Heart left ventricle (tissue), 16 donors: ENCODE measurements at regions of chr16 and their contacts with region 1.

Region 1: DNA sequence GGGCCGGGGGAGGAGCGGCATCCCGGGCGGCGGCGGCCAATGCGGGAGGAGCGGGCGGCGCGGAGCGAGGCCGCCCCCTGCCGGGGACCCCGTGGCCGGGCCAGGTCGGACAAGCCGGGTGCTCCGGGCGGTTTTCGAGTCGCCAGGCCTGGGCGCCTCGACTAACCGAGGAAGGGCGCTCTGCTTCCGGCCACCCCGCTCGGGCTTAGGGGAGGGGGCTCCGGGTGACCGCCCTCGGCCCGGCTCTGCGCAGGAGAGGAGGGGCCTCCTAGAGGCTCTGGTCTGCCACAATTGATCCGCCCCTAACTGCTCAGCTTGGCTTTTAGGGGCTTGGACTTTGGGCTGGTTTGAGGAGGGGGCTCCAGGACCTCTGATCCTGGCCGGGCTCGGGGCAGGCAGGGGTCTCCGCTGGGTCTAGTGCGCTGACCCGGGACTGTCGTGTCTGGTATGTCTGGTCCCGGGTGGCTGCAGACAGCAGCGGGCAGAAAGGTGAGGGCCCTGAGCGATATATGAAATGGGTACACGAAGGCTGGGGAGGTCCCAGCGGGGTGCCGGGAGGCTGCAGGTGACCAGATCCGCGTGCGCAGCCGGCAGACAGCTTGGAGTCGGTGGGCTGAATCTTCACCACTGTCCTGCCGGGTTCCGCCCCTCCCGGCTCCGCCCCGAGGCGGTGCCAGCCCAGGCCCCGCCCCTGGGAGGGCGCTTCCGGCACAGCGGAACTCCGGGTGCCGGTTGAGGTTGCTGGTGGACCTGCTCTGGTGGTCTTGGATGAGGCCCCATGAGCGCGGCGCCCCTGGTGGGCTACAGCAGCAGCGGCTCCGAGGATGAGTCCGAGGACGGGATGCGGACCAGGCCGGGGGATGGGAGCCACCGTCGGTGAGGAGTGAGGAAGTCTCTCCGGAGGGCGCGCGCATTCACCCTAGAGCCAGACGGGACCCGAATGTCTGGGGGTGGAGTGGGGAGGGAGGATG is at the start of gene USB1:
- DNase-seq: peak; percentile 90 to 95 (median 92)
- ATAC-seq: peak; percentile 90 to 96 (median 92)
- H3K4me3 ChIP-seq: peak within 1 kb of the TSS; percentile 27 to 89 (median 76)
- H3K27ac ChIP-seq: peak within 1 kb of the TSS; percentile 66 to 99 (median 92)
- H3K4me1 ChIP-seq: peaks cover 0 to 45% (median 28%) of the 10 kb centered on the region in 12 donors
- H3K27me3 ChIP-seq: no peaks in the 10 kb centered on the region
- CTCF ChIP-seq: peak; percentile 50 to 93 (median 77)
- POLR2A ChIP-seq: peak in 1 of 2 donors; percentile 88
- total RNA-seq, gene USB1: 20.3 to 61.9 (median 34.4) TPM

Region 2: DNA sequence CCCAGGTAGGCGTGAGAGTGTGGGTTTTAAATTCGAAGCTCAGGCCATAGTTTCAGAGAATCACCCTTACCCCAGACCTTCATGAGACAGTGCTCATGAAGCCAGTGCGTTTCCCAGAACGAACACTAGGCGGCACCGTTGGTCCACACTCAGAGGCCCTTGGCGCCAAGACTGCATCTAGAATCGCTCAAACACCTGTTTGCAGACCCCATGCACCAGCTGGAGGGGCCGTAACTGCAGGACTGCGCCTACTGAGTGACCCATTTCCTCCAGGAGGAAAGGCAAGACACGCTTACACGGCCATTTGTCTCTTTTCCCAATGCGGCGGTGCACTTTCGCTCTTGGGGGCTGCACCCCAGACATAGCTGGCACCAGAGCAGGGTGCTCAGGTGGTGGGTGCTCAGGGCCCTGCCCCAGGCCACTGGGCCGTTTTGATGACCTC is 424.5 kb before region 1 on chr16:
- intact Hi-C with region 1: loop called in 8 of 10 experiments (anchors 5 to 10 kb)
- DNase-seq: peak; percentile 56 to 83 (median 68)
- ATAC-seq: peak; percentile 56 to 81 (median 78)
- H3K4me3 ChIP-seq: no peak overlapping the region
- H3K27ac ChIP-seq: peak overlapping the region in 1 of 12 donors; percentile 75
- H3K4me1 ChIP-seq: peaks cover 0 to 4% (median 0%) of the 10 kb centered on the region in 12 donors
- H3K27me3 ChIP-seq: peaks cover 0 to 17% (median 0%) of the 10 kb centered on the region in 9 donors
- CTCF ChIP-seq: peak; percentile 86 to 96 (median 93)
- POLR2A ChIP-seq: no peak

Region 3: GRCh38 chr16:57734925-57735754 is 265.9 kb before region 1 on chr16:
- intact Hi-C with region 1: loop called in 2 of 10 experiments (anchors 5 to 10 kb)
- DNase-seq: peak; percentile 97 to 99 (median 98)
- ATAC-seq: peak; percentile 95 to 97 (median 96)
- H3K4me3 ChIP-seq: peak overlapping the region; percentile 56 to 98 (median 88)
- H3K27ac ChIP-seq: peak overlapping the region; percentile 68 to 96 (median 88)
- H3K4me1 ChIP-seq: peaks cover 0 to 26% (median 18%) of the 10 kb centered on the region in 12 donors
- H3K27me3 ChIP-seq: no peaks in the 10 kb centered on the region
- CTCF ChIP-seq: no peak
- POLR2A ChIP-seq: peak in 1 of 2 donors; percentile 40

Region 4: GRCh38 chr16:57757326-57757786 is 243.6 kb before region 1 on chr16:
- intact Hi-C with region 1: loop called in 9 of 10 experiments (anchors 2 to 10 kb)
- DNase-seq: peak; percentile 89 to 96 (median 89)
- ATAC-seq: peak; percentile 82 to 90 (median 84)
- H3K4me3 ChIP-seq: no peak overlapping the region
- H3K27ac ChIP-seq: peak overlapping the region in 11 of 12 donors; percentile 50 to 81 (median 73)
- H3K4me1 ChIP-seq: peaks cover 0 to 29% (median 14%) of the 10 kb centered on the region in 12 donors
- H3K27me3 ChIP-seq: no peaks in the 10 kb centered on the region
- CTCF ChIP-seq: peak in 11 of 12 donors; percentile 95 to 99 (median 98)
- POLR2A ChIP-seq: no peak

Region 5: DNA sequence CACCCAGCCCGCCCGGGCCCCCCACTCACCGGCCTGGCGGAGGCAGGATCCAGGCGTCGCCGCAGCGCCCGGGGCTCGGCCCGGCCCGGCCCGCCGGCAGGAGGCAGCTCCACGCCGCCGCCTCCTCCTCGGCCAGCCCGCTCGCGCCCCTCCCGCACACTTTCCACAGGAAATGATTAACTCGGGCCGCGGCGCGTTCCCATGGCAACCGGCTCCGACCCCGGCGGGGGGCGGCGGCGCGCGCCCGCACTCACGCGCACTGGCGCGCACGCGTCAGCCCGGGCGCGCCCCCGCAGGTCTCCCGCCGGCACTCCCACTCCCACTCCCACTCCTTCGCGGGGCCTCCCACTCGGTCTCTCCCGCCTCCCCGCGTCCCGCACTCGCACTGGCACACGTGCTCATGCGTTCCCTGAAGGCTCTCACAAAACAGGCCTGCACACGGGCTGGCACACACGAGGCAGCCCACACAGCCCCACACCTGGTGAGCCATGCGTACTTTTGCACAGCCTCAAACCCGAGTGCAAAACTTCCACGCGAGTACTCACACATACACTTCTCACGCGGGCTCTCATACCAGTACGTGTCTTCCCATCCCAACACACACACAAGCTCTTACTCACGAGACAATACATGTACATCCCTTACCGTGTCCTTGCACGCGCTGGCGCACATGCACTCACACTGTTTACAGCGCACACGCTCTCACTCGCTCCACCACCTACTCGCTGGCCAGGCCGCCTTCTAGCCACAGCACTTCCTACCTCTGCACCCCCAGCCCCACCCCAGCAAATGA is 198.5 kb before region 1 on chr16 and contains the start of gene KIFC3:
- intact Hi-C with region 1: loop called in 2 of 10 experiments (anchors 5 to 10 kb)
- DNase-seq: peak; percentile 91 to 94 (median 92)
- ATAC-seq: peak in 3 of 4 donors; percentile 27 to 56 (median 47)
- H3K4me3 ChIP-seq: peak within 1 kb of the TSS; percentile 49 to 91 (median 72)
- H3K27ac ChIP-seq: peak within 1 kb of the TSS; percentile 67 to 99 (median 95)
- H3K4me1 ChIP-seq: peaks cover 6 to 88% (median 61%) of the 10 kb centered on the region in 12 donors
- H3K27me3 ChIP-seq: no peaks in the 10 kb centered on the region
- CTCF ChIP-seq: peak in 8 of 12 donors; percentile 20 to 58 (median 41)
- POLR2A ChIP-seq: no peak
- total RNA-seq, gene KIFC3: 46.1 to 105 (median 66.8) TPM

Region 6: DNA sequence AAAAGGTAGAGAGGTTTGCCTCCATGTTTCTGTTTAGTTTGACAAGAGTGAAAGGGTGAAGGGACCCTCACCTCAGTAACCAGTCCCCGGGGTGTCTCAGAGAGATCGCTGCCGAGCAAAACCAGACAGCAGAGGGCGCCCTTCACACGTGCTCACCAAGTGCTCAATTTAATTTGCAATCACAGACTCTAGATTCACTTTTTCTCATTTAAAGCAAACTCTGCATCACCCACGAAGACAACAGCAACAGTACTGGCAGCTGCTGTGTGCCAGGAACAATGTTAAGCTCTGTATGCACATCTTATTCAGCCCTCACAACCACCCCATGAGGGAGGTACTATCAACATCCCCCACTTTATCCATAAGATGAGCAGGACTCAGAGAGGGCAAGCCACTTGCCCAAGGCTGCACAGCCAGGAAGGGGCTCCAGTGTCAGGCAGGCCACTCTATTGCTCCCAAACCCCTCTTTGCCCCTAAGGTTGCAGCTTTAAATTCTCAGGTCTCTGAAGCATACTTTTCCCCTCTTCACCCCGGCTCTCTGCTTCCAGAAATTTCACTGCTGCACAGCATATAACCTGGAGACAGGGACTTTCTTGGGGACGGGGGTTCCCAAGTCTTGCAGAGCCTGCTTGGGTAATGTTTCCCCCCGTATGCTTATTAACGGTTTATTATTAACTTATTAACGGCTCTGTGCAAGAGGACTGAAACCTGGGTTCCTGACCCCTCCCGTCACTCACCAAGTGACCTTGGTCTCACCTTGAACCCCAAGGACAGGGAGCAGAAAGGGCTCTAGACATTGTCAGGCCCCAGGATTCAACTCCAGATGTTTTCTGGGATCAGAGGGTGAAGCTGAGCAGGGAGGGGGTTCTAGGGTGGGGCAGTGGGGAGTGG is 101.0 kb before region 1 on chr16:
- intact Hi-C with region 1: loop called (anchors 1 to 2 kb)
- DNase-seq: peak; percentile 59 to 87 (median 70)
- ATAC-seq: peak; percentile 16 to 85 (median 74)
- H3K4me3 ChIP-seq: no peak overlapping the region
- H3K27ac ChIP-seq: no peak overlapping the region
- H3K4me1 ChIP-seq: peaks cover 0 to 15% (median 0%) of the 10 kb centered on the region in 12 donors
- H3K27me3 ChIP-seq: peaks cover 0 to 22% (median 5%) of the 10 kb centered on the region in 9 donors
- CTCF ChIP-seq: peak; percentile 77 to 96 (median 88)
- POLR2A ChIP-seq: no peak

Region 7: GRCh38 chr16:58047557-58048348 is 46.8 kb after region 1 on chr16:
- intact Hi-C with region 1: no loop called
- DNase-seq: peak in 3 of 5 donors; percentile 54 to 63 (median 58)
- ATAC-seq: peak; percentile 9 to 71 (median 38)
- H3K4me3 ChIP-seq: no peak overlapping the region
- H3K27ac ChIP-seq: peak overlapping the region; percentile 43 to 86 (median 70)
- H3K4me1 ChIP-seq: peaks cover 4 to 55% (median 34%) of the 10 kb centered on the region in 12 donors
- H3K27me3 ChIP-seq: no peaks in the 10 kb centered on the region
- CTCF ChIP-seq: peak in 3 of 12 donors; percentile 13 to 25 (median 22)
- POLR2A ChIP-seq: no peak